ENCODE measurements at regions of chr20 and their contacts with region 1.

Region 1: DNA sequence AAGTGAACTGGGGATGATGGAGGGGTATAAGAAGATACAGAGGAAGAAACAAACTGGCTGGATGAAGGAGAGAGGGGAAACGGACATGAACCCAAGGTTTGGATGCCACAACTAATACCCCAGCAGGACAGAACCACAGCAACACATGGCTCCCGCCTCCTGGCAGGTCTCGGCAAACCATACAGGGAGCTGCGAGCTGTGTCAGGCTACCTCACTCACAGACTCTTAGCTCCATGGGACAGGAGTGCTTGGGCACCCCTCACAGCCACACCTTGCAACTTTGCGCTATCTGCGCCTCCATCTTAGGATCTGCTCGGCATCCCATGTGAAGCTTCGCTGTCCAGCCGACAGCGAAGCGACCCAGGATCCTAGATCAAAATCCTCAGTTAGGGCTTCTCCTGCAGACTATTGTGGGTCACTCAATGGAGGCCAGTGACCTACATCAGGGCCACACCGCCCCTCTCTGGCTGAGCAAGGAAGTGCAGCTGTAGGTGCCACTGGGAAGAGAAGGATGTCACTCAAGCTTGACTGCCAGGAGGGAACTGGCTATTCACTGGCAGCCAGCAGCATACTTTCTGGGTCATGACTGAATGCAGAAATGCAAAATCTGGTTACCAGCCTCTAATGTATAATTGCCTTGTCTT is 174.4 kb upstream of the RIN2 start:
- DNase-seq: peak; percentile 5
- ATAC-seq: peak; percentile 75
- H3K4me3 ChIP-seq: no peak overlapping the region
- H3K27ac ChIP-seq: no peak overlapping the region
- H3K4me1 ChIP-seq: no peaks in the 10 kb centered on the region
- H3K27me3 ChIP-seq: peaks cover 3% of the 10 kb centered on the region
- CTCF ChIP-seq: peak; percentile 53
- POLR2A ChIP-seq: no peak
- RAD21 ChIP-seq: peak; percentile 64

Region 2: DNA sequence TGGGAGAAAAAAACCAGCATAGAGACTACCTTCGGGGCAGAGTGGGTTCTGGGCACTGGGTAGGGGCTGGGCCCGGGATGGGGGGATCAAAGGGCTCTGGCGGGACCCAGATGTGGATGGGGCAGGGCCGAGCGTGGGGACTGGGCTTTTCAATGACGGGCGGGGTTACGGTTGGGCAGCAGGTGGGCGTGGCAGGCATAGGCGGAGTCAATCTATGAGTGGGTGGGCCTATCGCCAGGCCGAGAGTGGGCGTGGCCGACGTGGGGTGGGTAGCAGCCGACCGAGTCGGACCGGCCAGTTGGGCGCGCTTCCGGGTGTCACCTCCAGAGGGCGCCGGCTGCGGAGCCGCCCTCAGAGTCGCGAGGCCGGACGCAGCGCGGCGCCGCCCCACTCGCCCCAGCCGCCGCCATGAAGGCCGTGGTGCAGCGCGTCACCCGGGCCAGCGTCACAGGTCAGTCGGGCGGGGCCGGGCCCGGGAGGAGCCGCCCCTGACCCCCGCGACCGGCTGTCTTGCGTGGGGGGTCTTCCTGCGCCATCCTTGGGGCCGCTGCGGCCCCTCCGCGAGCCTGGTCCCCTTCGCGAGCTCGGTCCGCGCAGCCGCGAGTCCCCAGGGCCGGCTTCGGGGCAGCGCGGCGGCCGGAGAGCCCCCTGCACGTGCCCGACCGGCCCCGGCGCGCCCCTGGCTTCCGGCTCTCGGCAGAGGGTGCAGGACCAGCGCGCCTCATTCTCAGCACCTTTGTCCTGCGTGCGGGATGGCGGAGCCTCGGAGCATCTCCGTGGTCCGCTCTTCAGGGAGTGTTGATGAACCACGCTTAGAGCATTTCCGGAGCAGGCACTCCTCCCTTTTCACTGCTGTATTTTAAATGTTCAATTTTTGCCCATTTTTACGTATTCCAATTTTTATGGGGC is 995.7 kb before region 1 on chr20 and contains the start of gene DTD1:
- CTCF ChIA-PET with region 1: no interaction called
- POLR2A ChIA-PET with region 1: no interaction called
- dilution Hi-C with region 1: no loop called
- in situ Hi-C with region 1: no loop called
- intact Hi-C with region 1: loop called (anchors 5 kb)
- DNase-seq: peak; percentile 81
- ATAC-seq: peak; percentile 97
- H3K4me3 ChIP-seq: peak within 1 kb of the TSS; percentile 75
- H3K27ac ChIP-seq: peak within 1 kb of the TSS; percentile 41
- H3K4me1 ChIP-seq: no peaks in the 10 kb centered on the region
- H3K27me3 ChIP-seq: no peaks in the 10 kb centered on the region
- CTCF ChIP-seq: peak; percentile 62
- POLR2A ChIP-seq: peak; percentile 50; the same call in 1 of the 2 replicates
- RAD21 ChIP-seq: no peak
- total RNA-seq, gene DTD1: 101 and 124 TPM in 2 replicates

Region 3: DNA sequence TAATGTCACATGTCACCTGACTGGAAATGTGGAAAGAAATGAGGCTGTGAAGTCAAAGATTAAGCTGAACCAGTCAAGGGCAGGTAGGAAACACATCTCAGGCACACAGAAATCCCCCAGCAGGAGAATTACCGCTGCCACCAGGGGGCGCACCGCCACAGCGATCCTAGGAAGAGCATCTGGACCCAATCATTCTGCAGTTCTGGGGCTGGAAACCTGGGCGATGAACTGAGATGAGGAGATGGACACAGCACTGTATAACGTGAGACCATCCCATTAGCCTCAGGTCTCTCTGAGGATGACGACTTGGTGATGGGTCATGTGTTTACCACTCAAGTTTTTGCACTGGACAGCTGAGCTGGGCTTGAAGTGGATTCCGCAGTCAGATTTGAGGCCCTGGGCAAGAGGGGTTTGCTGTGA is 377.7 kb before region 1 on chr20:
- CTCF ChIA-PET with region 1: no interaction called
- POLR2A ChIA-PET with region 1: no interaction called
- dilution Hi-C with region 1: no loop called
- in situ Hi-C with region 1: no loop called
- intact Hi-C with region 1: loop called (anchors 2 kb)
- DNase-seq: peak; percentile 10
- ATAC-seq: peak; percentile 42
- H3K4me3 ChIP-seq: no peak overlapping the region
- H3K27ac ChIP-seq: no peak overlapping the region
- H3K4me1 ChIP-seq: no peaks in the 10 kb centered on the region
- H3K27me3 ChIP-seq: peaks cover 4% of the 10 kb centered on the region; the same call in 1 of the 2 replicates
- CTCF ChIP-seq: peak; percentile 69
- POLR2A ChIP-seq: no peak
- RAD21 ChIP-seq: peak; percentile 57

Measured in IMR-90 (cell line).